HCT116 (cell line): ENCODE measurements at regions of chr4 and their contacts with region 1.

Region 1: DNA sequence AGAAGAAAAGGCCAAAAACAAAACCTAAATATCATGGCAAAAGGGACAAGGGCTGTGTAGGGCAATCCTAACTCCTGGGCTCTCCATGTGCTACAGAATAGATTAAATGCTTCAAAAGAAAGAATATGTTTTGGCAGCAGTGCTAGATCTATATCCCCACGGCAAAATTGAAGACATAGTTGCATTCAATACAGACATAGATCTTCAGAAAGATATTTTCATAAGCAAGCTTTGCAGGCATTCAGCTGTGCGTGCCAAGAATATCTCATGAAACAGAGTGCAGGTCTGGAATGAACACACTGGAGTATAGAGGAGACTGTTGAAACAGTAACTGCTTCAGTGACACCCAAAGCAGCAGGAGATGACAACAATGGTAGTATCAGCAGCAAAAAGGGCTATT is 1476.9 kb downstream of the ARAP2 start:
- DNase-seq: no peak
- ATAC-seq: no peak
- H3K4me3 ChIP-seq: no peak overlapping the region
- H3K27ac ChIP-seq: no peak overlapping the region
- H3K4me1 ChIP-seq: no peaks in the 10 kb centered on the region
- H3K27me3 ChIP-seq: no peaks in the 10 kb centered on the region
- CTCF ChIP-seq: no peak
- POLR2A ChIP-seq: no peak
- RAD21 ChIP-seq: no peak

Region 2: DNA sequence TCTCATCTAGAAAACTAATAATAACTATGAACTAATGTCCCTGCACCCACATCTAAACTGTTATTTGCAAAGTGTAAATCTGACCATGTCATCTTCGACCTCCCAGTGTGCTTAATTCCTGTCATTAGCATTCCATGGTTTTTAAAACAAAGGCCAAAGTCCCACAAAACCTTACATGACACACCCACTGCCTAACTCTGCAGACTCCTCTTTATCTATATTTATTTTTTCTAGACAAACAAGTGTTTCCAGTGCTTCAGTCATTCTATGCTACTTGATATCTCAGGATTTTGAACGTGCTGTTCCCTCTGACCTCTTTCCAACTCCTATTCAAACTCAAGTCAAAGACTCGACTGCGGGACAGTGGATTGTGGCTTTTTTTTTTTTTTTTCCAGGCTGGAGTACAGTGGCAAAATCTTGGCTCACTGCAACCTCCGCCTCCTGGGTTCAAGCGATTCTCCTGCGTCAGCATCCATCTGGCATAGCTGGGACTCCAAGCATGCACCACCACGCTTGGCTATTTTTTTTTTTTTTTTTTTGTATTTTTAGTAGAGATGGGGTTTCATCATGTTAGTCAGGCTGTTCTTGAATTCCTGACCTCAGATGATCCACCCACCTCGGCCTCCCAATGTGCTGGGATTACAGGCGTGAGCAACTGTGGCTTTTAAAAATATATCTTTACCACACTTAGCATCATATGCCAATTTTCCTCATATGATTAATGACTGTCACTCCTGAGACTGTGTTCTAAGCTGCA is 34.0 kb before region 1 on chr4:
- CTCF ChIA-PET with region 1: no interaction called
- POLR2A ChIA-PET with region 1: no interaction called
- RAD21 ChIA-PET with region 1: no interaction called
- intact Hi-C with region 1: no loop called
- DNase-seq: no peak
- ATAC-seq: no peak
- H3K4me3 ChIP-seq: no peak overlapping the region
- H3K27ac ChIP-seq: no peak overlapping the region
- H3K4me1 ChIP-seq: no peaks in the 10 kb centered on the region
- H3K27me3 ChIP-seq: no peaks in the 10 kb centered on the region
- CTCF ChIP-seq: no peak
- POLR2A ChIP-seq: no peak
- RAD21 ChIP-seq: no peak

Region 3: GRCh38 chr4:35151816-35152572 is 384.6 kb after region 1 on chr4:
- CTCF ChIA-PET with region 1: no interaction called
- POLR2A ChIA-PET with region 1: no interaction called
- RAD21 ChIA-PET with region 1: no interaction called
- intact Hi-C with region 1: loop called (anchors 5 kb)
- DNase-seq: peak; percentile 29
- ATAC-seq: peak; percentile 87
- H3K4me3 ChIP-seq: no peak overlapping the region
- H3K27ac ChIP-seq: no peak overlapping the region
- H3K4me1 ChIP-seq: no peaks in the 10 kb centered on the region
- H3K27me3 ChIP-seq: no peaks in the 10 kb centered on the region
- CTCF ChIP-seq: peak; percentile 23 to 73 (median 73); a peak in 5 of 6 replicates
- POLR2A ChIP-seq: no peak
- RAD21 ChIP-seq: peak; percentile 63